PC-9 (cell line): ENCODE measurements at regions of chr9 and their contacts with region 1.

Region 1: DNA sequence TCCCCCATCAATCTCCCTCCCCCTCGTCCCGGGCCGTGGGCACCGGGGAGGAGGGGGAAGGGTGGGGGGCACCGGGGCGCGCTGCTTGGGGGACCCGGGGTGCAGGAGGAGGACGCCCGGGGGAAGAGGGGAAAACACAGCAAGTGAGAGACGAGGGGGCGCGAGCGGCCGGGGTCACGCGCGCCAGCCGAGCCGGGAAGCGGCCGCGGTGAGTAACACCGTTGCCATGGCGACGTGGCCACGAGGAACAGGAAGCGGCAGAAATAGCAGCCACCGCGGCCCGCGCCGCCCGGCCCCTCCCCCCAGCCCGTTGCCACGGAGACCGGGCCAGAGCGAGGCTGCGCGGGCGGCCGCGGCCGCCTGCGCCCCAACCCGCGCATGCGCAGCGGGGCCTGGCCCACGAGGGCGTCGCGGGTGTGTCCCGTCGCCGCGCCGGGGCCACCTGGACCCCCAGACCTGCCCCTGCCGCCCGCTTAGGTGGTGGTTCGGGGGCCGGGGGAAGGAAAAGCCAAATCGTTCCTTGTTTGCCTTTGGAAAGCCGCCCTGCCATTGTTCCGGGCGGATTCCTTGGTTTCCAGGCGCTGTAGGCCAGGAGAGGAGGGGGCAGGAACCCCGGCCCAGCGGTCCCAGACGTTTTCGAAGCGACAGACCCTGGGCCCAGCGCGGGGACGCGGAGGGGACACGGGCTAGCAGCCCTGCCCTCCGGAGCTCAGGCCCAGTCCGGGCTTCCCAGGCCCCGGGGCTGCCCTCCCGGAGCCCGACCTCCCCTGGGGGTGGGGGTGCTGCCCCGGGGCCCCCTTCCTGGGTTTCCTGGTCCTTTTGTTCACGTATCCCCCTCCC is 207.1 kb downstream of the C9orf50 start:
- DNase-seq: peak; percentile 87 to 99
- H3K4me3 ChIP-seq: peak overlapping the region; percentile 77
- H3K27ac ChIP-seq: peak overlapping the region; percentile 85
- H3K4me1 ChIP-seq: peaks cover 24% of the 10 kb centered on the region
- H3K27me3 ChIP-seq: no peaks in the 10 kb centered on the region
- CTCF ChIP-seq: no peak

Region 2: GRCh38 chr9:129172802-129173201 is 241.0 kb before region 1 on chr9:
- CTCF ChIA-PET with region 1: no interaction called
- POLR2A ChIA-PET with region 1: interaction called, 20 read pairs
- intact Hi-C with region 1: loop called (anchors 5 kb)
- DNase-seq: no peak
- H3K4me3 ChIP-seq: no peak overlapping the region
- H3K27ac ChIP-seq: no peak overlapping the region
- H3K4me1 ChIP-seq: peaks cover 33% of the 10 kb centered on the region
- H3K27me3 ChIP-seq: no peaks in the 10 kb centered on the region
- CTCF ChIP-seq: no peak

Region 3: DNA sequence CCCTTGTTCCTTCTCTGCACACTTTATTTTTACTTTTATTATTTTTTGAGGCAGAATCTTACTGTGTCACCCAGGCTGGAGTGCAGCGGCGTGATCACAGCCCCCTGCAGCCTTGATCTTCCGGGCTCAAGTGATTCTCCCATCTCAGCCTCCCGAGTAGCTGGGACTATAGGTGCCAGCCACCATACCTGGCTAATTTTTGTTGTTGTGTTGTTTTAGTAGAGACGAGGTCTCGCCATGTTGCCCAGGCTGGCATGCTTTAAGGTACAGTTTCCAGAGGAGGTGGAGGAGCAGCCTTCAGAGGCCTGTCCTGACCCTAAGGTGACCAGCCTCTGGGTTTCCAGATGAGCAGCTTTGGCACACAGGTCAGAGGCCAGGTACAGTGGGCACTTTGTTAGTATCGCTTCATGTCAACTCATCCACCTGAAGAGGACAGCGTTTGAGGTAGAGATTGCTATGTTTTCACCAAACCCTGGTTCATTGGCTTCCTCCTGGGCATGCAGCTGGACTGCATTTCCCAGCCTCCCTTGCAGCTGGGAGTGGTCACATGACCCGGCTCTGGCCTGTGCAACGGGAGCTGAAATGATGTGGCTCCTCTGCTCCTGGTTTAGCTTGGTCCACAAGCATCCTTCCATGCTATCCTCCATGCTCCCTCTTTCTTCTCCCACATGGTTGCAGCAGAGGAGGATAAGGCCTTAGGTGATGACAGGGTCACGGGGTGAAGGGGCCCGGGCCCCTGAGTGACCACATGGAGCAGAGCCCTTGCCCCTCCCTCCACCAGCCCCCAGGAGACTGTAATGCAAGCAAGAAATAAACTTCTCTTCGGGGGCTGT is 96.4 kb before region 1 on chr9:
- CTCF ChIA-PET with region 1: no interaction called
- POLR2A ChIA-PET with region 1: no interaction called
- intact Hi-C with region 1: no loop called
- DNase-seq: peak in 1 of 2 experiments; percentile 29
- H3K4me3 ChIP-seq: no peak overlapping the region
- H3K27ac ChIP-seq: no peak overlapping the region
- H3K4me1 ChIP-seq: no peaks in the 10 kb centered on the region
- H3K27me3 ChIP-seq: no peaks in the 10 kb centered on the region
- CTCF ChIP-seq: no peak

Region 4: DNA sequence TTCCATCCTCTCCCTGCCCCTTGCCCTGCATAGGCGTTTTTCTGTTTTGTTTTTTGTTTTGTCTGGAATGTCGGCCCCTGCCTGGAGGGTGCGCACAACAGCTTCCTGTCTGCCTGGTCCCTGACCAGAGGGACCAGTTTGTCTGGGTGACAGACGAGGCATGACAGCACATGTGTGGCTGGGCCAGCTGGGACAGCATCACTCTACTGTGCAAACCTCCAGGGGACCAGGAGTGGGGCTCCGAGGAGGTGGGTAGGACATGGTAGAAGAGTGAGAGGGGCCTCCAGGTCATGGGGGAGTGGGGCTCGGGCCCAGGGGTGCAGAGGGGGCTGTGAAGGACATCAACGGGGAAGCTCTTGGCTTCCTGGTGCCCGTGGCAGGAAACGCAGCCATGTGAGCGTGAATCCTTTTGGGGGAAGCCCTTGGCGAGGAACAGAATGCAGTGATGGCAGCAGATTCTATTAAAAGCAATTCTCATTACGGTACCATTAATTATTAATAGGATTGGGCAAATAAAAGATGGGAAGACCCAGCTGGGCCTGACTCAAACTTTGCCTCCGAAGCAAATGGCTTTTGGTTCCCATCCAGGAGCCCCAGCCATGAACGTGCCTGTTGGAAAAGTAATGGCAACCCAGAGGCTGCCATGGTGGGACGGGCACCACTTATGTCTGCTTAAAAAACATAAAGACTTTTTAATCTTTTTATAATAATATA is 51.3 kb before region 1 on chr9:
- CTCF ChIA-PET with region 1: no interaction called
- POLR2A ChIA-PET with region 1: no interaction called
- intact Hi-C with region 1: loop called (anchors 10 kb)
- DNase-seq: peak; percentile 77 to 80
- H3K4me3 ChIP-seq: no peak overlapping the region
- H3K27ac ChIP-seq: no peak overlapping the region
- H3K4me1 ChIP-seq: peaks cover 25% of the 10 kb centered on the region
- H3K27me3 ChIP-seq: no peaks in the 10 kb centered on the region
- CTCF ChIP-seq: peak; percentile 50